Naive thymus-derived CD8-positive, alpha-beta T cell (primary cell): ENCODE measurements at regions of chr20 and their contacts with region 1.

Region 1: GRCh38 chr20:63739130-63740069 is at the start of gene SLC2A4RG:
- DNase-seq: peak; percentile 50 to 80 (median 68)
- ATAC-seq: peak; percentile 15 to 25
- H3K4me3 Mint-ChIP-seq: peak within 1 kb of the TSS; percentile 36 to 95 (median 66)
- H3K27ac Mint-ChIP-seq: peak within 1 kb of the TSS in 5 of 10 donors; percentile 27 to 67 (median 52)
- H3K4me1 Mint-ChIP-seq: peaks cover 12 to 21% (median 19%) of the 10 kb centered on the region in 4 donors
- H3K27me3 Mint-ChIP-seq: no peaks in the 10 kb centered on the region
- polyA plus RNA-seq, gene SLC2A4RG: 3.8 to 4.8 (median 4.7) TPM

Region 2: DNA sequence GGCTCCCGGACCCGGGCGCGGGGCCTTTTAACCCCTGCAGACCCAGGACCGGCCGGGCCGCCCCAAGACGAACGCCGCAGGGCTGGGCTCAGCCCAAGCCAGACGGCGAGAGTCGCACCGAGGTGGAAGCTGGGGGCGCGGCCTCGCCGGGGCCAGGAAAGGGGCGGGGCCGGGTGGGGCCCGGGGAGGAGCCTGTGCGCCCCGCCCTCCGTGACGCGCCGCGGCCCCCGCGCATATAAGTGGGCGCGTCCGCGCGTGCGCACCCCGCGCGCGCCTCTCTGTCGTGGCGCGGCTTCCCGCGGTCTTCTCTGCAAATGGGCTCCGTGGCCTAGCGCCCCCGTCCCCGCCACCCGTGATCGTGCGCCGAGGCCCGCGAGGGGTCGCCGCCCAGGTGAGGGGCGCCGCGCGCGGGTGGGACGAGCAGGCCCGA is 218.9 kb before region 1 on chr20 and contains the start of gene PPDPF:
- POLR2A ChIA-PET with region 1: interaction called, 12 read pairs
- DNase-seq: peak; percentile 74 to 94 (median 86)
- ATAC-seq: peak; percentile 78
- H3K4me3 Mint-ChIP-seq: peak within 1 kb of the TSS; percentile 74 to 89 (median 82)
- H3K27ac Mint-ChIP-seq: peak within 1 kb of the TSS; percentile 44 to 92 (median 84)
- H3K4me1 Mint-ChIP-seq: peaks cover 12 to 24% (median 14%) of the 10 kb centered on the region in 4 donors
- H3K27me3 Mint-ChIP-seq: peaks cover 0 to 2% (median 0%) of the 10 kb centered on the region in 5 donors
- polyA plus RNA-seq, gene PPDPF: 47.4 to 93.1 (median 78.1) TPM

Region 3: DNA sequence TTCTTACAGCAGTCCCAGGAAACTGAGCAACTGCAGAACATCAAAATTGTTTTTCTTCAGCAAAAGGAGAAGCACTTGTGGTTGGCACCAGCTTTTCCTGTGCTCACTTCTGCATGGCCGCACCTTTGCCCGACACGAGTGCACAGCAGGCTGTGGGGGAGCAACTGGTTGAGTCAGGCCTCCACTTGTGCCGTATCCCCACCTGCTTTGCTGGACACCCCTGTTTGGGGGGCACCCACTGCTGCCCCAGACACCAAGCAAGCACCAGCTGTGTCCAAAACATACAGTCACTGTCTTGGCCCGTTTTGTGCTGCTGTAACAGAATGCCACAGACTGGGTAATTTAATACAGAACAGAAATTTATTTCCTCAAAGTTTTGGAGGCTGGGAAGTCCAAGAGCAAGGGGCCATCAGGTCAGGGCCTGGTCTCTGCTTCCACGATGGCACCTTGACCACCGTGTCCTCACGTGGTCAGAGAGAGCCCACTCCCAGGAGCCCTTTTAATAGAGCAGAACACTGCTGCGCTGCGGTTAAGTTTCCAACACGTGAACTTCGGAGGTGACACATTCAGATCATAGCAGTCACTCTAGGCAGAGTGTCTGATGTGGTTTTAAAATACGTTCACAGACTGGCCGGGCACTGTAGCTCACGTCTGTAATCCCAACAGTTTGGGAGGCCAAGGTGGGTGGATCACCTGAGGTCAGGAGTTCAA is 103.8 kb before region 1 on chr20:
- POLR2A ChIA-PET with region 1: interaction called, 37 read pairs
- DNase-seq: peak; percentile 47 to 93 (median 85)
- ATAC-seq: peak; percentile 61 to 77
- H3K4me3 Mint-ChIP-seq: peak overlapping the region; percentile 75 to 90 (median 82)
- H3K27ac Mint-ChIP-seq: peak overlapping the region; percentile 95 to 100 (median 100)
- H3K4me1 Mint-ChIP-seq: peaks cover 17 to 81% (median 63%) of the 10 kb centered on the region in 4 donors
- H3K27me3 Mint-ChIP-seq: no peaks in the 10 kb centered on the region

Region 4: DNA sequence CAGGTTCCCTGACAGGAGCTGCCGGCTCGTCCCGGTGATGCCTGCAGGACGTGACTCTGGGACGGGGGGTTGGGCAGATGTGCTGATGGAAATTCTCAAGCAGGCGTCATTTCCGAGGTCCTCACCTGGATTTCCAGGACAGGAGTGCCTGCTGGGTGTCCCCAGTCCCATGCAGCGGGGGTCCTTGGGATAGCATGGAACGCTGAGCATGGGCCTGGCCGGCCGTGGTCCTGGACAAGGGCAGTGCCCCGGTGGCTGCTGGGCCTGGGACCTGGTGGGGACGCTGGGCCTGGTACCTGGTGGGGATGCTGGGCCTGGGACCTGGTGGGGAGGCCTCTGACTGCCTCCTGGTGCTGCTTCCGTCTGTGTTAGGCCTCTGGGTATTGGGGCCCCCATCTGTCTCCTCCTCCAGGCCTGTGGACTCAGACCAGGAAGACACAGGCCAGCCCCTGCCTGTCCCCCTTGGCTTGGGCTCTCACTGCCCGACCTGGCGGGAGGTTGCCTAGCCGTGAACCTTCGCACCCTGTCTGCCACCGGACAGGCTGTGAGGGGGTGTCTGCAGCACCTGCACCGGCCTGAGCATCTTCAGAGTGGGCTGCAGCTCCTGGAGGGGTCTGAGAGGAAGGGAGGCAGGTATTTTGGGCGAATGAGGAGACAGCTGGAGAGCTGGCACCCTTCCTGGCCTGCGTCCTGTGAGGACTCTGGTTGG is 75.1 kb before region 1 on chr20:
- POLR2A ChIA-PET with region 1: no interaction called
- DNase-seq: no peak
- ATAC-seq: no peak
- H3K4me3 Mint-ChIP-seq: no peak overlapping the region
- H3K27ac Mint-ChIP-seq: no peak overlapping the region
- H3K4me1 Mint-ChIP-seq: peaks cover 2 to 13% (median 10%) of the 10 kb centered on the region in 4 donors
- H3K27me3 Mint-ChIP-seq: no peaks in the 10 kb centered on the region

Region 5: GRCh38 chr20:63698739-63699465 is 40.5 kb before region 1 on chr20:
- POLR2A ChIA-PET with region 1: interaction called, 15 read pairs
- DNase-seq: no peak
- ATAC-seq: no peak
- H3K4me3 Mint-ChIP-seq: no peak overlapping the region
- H3K27ac Mint-ChIP-seq: peak overlapping the region in 1 of 10 donors; percentile 28
- H3K4me1 Mint-ChIP-seq: peaks cover 9 to 24% (median 16%) of the 10 kb centered on the region in 4 donors
- H3K27me3 Mint-ChIP-seq: no peaks in the 10 kb centered on the region

Region 6: GRCh38 chr20:63714858-63715257 is 24.5 kb before region 1 on chr20:
- POLR2A ChIA-PET with region 1: interaction called, 162 read pairs
- DNase-seq: no peak
- ATAC-seq: no peak
- H3K4me3 Mint-ChIP-seq: no peak overlapping the region
- H3K27ac Mint-ChIP-seq: no peak overlapping the region
- H3K4me1 Mint-ChIP-seq: peaks cover 24 to 64% (median 53%) of the 10 kb centered on the region in 4 donors
- H3K27me3 Mint-ChIP-seq: no peaks in the 10 kb centered on the region

Region 7: DNA sequence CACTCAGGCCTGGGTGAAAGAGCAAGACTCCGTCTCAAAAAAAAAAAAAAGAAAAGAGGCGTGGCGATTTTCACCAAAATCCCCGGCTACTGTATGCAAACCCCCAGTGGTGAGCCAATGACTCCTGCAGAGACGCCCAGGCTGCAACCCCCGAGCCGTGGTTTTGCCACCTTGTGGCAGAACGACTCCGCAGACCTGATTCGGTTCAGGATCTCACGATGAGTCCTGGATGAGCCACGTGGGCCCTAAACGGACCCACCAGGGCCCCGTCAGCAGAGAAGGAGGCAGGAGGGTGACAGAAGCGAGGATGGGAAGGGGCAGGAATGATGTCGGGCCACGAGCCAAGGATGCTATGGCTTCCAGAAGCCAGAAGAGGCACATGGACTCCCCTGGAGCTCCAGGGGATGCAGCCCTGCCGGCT is 42.7 kb after region 1 on chr20:
- POLR2A ChIA-PET with region 1: interaction called, 14 read pairs
- DNase-seq: peak; percentile 21 to 88 (median 70)
- ATAC-seq: peak; percentile 94 to 97
- H3K4me3 Mint-ChIP-seq: peak overlapping the region; percentile 22 to 80 (median 65)
- H3K27ac Mint-ChIP-seq: peak overlapping the region; percentile 44 to 93 (median 84)
- H3K4me1 Mint-ChIP-seq: peaks cover 8 to 28% (median 17%) of the 10 kb centered on the region in 4 donors
- H3K27me3 Mint-ChIP-seq: no peaks in the 10 kb centered on the region

Region 8: GRCh38 chr20:63808964-63809674 is 69.7 kb after region 1 on chr20:
- POLR2A ChIA-PET with region 1: no interaction called
- DNase-seq: no peak
- ATAC-seq: no peak
- H3K4me3 Mint-ChIP-seq: no peak overlapping the region
- H3K27ac Mint-ChIP-seq: no peak overlapping the region
- H3K4me1 Mint-ChIP-seq: peaks cover 2 to 4% (median 2%) of the 10 kb centered on the region in 4 donors
- H3K27me3 Mint-ChIP-seq: peaks cover 2 to 10% (median 4%) of the 10 kb centered on the region in 5 donors

Region 9: GRCh38 chr20:63819224-63819921 is 80.0 kb after region 1 on chr20:
- POLR2A ChIA-PET with region 1: no interaction called
- DNase-seq: no peak
- ATAC-seq: no peak
- H3K4me3 Mint-ChIP-seq: peak overlapping the region in 6 of 10 donors; percentile 0 to 57 (median 26)
- H3K27ac Mint-ChIP-seq: peak overlapping the region in 8 of 10 donors; percentile 30 to 82 (median 62)
- H3K4me1 Mint-ChIP-seq: peaks cover 0 to 7% (median 1%) of the 10 kb centered on the region in 4 donors
- H3K27me3 Mint-ChIP-seq: peaks cover 3 to 12% (median 4%) of the 10 kb centered on the region in 5 donors